Endothelial cell of umbilical vein (primary cell): ENCODE measurements at regions of chr7 and their contacts with region 1.

Region 1: DNA sequence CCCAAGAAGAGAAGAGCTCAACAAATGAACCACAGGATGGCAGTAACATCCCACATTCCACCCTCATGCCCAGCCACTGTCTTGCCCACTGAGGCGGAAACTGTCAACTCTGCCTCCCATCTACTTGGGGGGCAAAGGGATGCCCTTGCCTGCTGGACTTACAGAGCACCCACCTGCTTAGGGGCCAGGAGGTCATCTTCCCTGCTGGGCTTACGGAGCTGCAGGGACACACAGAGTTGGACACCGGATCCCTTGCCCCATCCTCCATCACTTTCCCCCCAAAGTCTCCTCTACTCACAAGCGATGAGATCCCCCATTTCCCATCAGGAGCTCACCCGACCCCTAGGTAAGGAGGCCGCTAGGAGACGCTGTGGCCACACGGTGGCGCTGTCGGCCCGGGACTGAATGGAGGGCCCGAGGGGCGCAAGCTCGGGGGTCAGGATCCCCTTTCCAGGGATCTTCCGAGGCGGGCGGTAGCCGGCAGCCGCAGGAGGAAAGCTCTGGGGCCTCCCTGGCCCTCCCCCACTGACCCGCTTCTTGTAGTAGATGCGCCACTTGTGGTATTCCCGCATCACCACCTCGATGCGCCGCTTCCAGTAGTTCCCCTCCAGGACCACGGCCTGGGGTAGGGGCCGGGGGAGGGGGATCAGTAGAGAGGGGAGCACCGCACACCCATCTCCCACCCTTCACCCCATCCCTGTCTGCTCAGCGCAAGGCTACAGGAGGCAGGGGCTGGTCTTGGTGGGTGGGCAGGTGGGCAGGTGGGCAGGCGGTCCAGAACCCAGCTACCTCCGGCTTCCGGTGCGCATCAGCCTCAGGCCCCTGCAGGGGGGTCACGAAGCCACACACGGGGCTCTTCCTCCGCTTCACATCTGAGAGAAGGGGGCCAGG is 17.3 kb downstream of the MLXIPL start:
- DNase-seq: peak; percentile 43
- H3K4me3 ChIP-seq: no peak overlapping the region
- H3K27ac ChIP-seq: no peak overlapping the region
- H3K4me1 ChIP-seq: no peaks in the 10 kb centered on the region
- H3K27me3 ChIP-seq: no peaks in the 10 kb centered on the region
- CTCF ChIP-seq: peak; percentile 90 to 92
- POLR2A ChIP-seq: no peak

Region 2: DNA sequence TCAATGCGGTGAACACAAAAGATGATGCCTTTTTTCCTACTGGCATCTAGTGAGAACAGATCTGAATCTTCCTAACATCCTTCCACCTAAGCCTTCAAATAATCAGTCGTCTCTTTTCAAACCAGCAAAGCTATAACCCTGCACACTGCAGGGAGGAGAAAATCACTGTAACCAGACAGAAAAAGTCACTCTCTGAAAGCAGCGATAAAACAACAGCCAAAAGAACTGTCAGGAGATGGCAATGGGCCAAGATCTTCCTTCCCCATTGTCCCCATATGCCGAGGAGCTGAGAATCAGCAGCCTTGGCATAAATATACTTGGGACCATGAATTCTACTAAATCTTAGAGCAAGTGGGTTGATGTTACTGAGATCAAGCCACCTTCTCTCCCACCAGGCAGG is 160.4 kb before region 1 on chr7:
- CTCF ChIA-PET with region 1: no interaction called
- POLR2A ChIA-PET with region 1: no interaction called
- dilution Hi-C with region 1: no loop called
- intact Hi-C with region 1: no loop called
- DNase-seq: no peak
- H3K4me3 ChIP-seq: no peak overlapping the region
- H3K27ac ChIP-seq: no peak overlapping the region
- H3K4me1 ChIP-seq: no peaks in the 10 kb centered on the region
- H3K27me3 ChIP-seq: no peaks in the 10 kb centered on the region
- CTCF ChIP-seq: no peak
- POLR2A ChIP-seq: no peak

Region 3: GRCh38 chr7:73585196-73585595 is 21.9 kb before region 1 on chr7:
- CTCF ChIA-PET with region 1: interaction called, 27 read pairs
- POLR2A ChIA-PET with region 1: no interaction called
- dilution Hi-C with region 1: no loop called
- intact Hi-C with region 1: no loop called
- DNase-seq: no peak
- H3K4me3 ChIP-seq: no peak overlapping the region
- H3K27ac ChIP-seq: no peak overlapping the region
- H3K4me1 ChIP-seq: peaks cover 12% of the 10 kb centered on the region
- H3K27me3 ChIP-seq: no peaks in the 10 kb centered on the region
- CTCF ChIP-seq: no peak
- POLR2A ChIP-seq: no peak

Region 4: DNA sequence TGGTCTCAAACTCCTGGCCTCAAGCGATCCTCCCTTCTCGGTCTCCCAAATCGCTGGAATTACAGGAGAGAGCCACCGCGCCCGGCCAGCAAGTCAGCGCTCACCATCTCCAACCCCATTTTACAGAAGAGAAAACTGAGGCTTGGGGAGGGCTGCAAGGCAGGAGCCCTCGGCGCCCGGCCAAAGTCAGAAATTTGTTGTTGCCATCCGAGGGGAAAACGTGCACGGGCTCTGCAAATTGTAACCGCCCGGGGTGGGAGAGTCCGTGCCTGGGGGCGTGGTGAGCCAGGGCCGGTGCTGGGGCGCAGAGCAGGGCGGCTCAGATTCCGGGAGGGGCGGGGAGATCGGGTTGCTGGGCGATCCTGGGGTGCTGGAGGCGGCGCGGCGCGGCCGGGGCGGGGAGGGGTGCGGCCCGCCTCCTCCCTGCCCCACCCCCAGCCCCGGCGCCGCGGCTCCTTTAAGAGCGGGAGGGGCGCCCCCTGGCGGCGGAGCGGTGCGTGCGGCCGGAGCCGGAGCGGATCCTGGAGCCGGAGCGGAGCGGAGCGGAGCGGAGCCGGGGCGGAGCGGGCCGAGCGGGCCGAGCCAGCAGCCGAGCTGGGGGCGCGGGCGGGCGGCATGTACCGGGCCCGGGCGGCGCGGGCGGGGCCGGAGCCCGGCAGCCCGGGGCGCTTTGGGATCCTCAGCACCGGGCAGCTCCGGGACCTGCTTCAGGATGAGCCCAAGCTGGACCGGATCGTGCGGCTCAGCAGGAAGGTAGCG is 60.5 kb after region 1 on chr7 and contains the start of gene VPS37D:
- CTCF ChIA-PET with region 1: interaction called, 57 read pairs
- POLR2A ChIA-PET with region 1: no interaction called
- dilution Hi-C with region 1: no loop called
- intact Hi-C with region 1: loop called (anchors 1 kb)
- DNase-seq: peak; percentile 74
- H3K4me3 ChIP-seq: peak within 1 kb of the TSS; percentile 35 to 67 (median 56)
- H3K27ac ChIP-seq: no peak within 1 kb of the TSS
- H3K4me1 ChIP-seq: peaks cover 3% of the 10 kb centered on the region
- H3K27me3 ChIP-seq: peaks cover 0 to 3% of the 10 kb centered on the region in 2 experiments
- CTCF ChIP-seq: peak; percentile 79 to 80
- POLR2A ChIP-seq: no peak
- total RNA-seq, gene VPS37D: 2.0 and 2.4 TPM in 2 replicates

Region 5: GRCh38 chr7:73707142-73707595 is 100.1 kb after region 1 on chr7:
- CTCF ChIA-PET with region 1: interaction called, 16 read pairs
- POLR2A ChIA-PET with region 1: no interaction called
- dilution Hi-C with region 1: no loop called
- intact Hi-C with region 1: no loop called
- DNase-seq: no peak
- H3K4me3 ChIP-seq: no peak overlapping the region
- H3K27ac ChIP-seq: no peak overlapping the region
- H3K4me1 ChIP-seq: peaks cover 9% of the 10 kb centered on the region
- H3K27me3 ChIP-seq: no peaks in the 10 kb centered on the region
- CTCF ChIP-seq: no peak
- POLR2A ChIP-seq: no peak

Region 6: GRCh38 chr7:73726083-73726466 is 119.0 kb after region 1 on chr7:
- CTCF ChIA-PET with region 1: interaction called, 270 read pairs
- POLR2A ChIA-PET with region 1: no interaction called
- dilution Hi-C with region 1: no loop called
- intact Hi-C with region 1: loop called (anchors 1 kb)
- DNase-seq: no peak
- H3K4me3 ChIP-seq: no peak overlapping the region
- H3K27ac ChIP-seq: no peak overlapping the region
- H3K4me1 ChIP-seq: peaks cover 5% of the 10 kb centered on the region
- H3K27me3 ChIP-seq: no peaks in the 10 kb centered on the region
- CTCF ChIP-seq: no peak
- POLR2A ChIP-seq: no peak

Region 7: GRCh38 chr7:73851410-73852234 is 244.6 kb after region 1 on chr7:
- CTCF ChIA-PET with region 1: interaction called, 21 read pairs
- POLR2A ChIA-PET with region 1: no interaction called
- dilution Hi-C with region 1: no loop called
- intact Hi-C with region 1: loop called (anchors 1 kb)
- DNase-seq: peak; percentile 97
- H3K4me3 ChIP-seq: no peak overlapping the region
- H3K27ac ChIP-seq: peak overlapping the region; percentile 93
- H3K4me1 ChIP-seq: peaks cover 16% of the 10 kb centered on the region
- H3K27me3 ChIP-seq: no peaks in the 10 kb centered on the region
- CTCF ChIP-seq: no peak
- POLR2A ChIP-seq: peak; percentile 39